Activated T-helper 1 cell treated with anti-CD3 and anti-CD28 coated beads, Interleukin-12 subunit alpha, Interleukin-12 subunit beta, Interleukin-2, Interleukin-4 antibody, amounts not matched to agents 30 ng/mL and 10 ng/mL and 1 ng/mL, durations not matched to agents 14 hours and 24 hours and 36 hours (primary cell): ENCODE measurements at regions of chr4 and their contacts with region 1.

Region 1: GRCh38 chr4:56655209-56655626 is 25.9 kb downstream of the HOPX start:
- DNase-seq: no peak
- H3K4me3 Mint-ChIP-seq: peak overlapping the region; percentile 87
- H3K27ac Mint-ChIP-seq: peak overlapping the region; percentile 85
- H3K4me1 Mint-ChIP-seq: peaks cover 68% of the 10 kb centered on the region
- H3K27me3 Mint-ChIP-seq: peaks cover 23% of the 10 kb centered on the region

Region 2: DNA sequence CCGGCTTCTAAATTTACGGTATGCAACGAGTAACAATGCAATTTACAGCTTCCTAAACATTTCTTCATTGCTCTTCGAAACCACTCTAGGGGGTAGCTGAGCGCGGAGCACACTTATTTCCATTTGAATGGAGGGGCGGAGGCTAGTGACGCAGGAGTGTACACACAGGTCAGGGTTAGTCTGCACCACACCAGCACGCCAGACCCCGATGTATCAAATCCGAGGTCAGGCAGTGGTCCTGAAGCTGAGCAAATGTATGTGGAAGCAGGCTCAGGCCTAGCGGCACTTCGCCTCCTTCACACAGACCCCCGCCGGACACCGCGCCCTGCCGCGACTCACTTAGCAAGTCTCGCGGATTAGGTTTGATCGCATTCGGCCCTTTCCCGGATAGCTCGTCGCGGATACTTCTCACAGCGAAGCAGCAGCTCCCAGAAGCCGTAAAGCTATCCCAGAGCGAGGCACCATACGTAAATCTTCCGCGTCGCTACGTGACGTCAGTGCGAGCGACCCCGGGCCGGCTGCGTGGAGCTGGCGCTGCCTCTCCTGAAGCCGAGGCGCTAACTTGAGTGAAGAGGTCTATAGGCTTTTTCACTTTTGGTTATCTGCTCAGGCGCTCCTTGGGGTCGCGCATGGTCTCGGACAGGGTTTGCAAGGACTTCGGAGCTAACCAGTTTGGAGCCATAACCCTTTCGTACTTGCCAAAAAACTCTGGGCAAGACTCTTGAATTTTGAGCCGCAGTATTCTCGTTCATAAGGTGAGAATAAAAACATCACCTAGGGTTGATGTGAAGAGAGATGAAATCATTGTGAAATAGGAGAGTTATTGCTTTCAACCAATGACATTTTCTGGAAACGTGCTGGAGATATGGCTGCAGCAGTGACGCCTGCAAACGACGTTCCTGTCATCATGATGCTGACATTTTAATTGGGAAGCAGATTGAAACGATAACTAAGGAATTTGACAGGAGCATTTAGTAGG is 267.9 kb before region 1 on chr4 and contains the start of gene AASDH:
- intact Hi-C with region 1: loop called (anchors 5 kb)
- DNase-seq: peak; percentile 93
- H3K4me3 Mint-ChIP-seq: peak within 1 kb of the TSS; percentile 92
- H3K27ac Mint-ChIP-seq: peak within 1 kb of the TSS; percentile 97
- H3K4me1 Mint-ChIP-seq: peaks cover 26% of the 10 kb centered on the region
- H3K27me3 Mint-ChIP-seq: no peaks in the 10 kb centered on the region
- total RNA-seq, gene AASDH: 9.8 and 12.0 TPM in 2 replicates

Region 3: GRCh38 chr4:56544573-56545131 is 110.6 kb before region 1 on chr4:
- intact Hi-C with region 1: loop called (anchors 2 kb)
- DNase-seq: peak; percentile 78
- H3K4me3 Mint-ChIP-seq: peak overlapping the region; percentile 68
- H3K27ac Mint-ChIP-seq: no peak overlapping the region
- H3K4me1 Mint-ChIP-seq: peaks cover 24% of the 10 kb centered on the region
- H3K27me3 Mint-ChIP-seq: peaks cover 15% of the 10 kb centered on the region

Region 4: DNA sequence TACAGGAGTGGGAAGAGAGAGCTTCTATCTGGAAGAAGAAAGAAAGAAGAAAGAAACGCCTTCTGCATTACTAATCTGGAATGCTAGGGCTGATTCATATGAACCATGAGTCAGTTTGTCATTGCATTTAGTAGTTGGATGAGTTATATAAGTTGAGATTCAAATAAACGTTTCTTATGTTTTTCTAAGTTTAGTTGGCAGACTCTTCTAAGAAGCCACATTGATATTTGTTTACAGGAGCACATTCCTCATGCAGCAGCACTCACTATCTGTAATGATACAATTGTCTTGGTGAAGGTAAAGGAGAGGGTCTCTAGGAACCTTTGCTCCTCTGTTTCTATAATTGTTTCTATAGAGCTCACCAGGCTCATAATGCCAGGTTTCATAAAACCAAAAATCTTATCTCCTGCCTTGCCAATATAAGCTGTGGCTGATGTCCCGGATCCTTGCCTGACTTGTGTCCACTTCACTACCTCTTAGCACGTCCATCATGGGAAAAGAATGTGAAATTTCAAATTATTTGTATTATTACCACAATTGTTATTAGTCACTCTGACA is 13.6 kb before region 1 on chr4:
- intact Hi-C with region 1: loop called (anchors 1 kb)
- DNase-seq: no peak
- H3K4me3 Mint-ChIP-seq: no peak overlapping the region
- H3K27ac Mint-ChIP-seq: peak overlapping the region; percentile 82
- H3K4me1 Mint-ChIP-seq: peaks cover 40% of the 10 kb centered on the region
- H3K27me3 Mint-ChIP-seq: peaks cover 3% of the 10 kb centered on the region

Region 5: DNA sequence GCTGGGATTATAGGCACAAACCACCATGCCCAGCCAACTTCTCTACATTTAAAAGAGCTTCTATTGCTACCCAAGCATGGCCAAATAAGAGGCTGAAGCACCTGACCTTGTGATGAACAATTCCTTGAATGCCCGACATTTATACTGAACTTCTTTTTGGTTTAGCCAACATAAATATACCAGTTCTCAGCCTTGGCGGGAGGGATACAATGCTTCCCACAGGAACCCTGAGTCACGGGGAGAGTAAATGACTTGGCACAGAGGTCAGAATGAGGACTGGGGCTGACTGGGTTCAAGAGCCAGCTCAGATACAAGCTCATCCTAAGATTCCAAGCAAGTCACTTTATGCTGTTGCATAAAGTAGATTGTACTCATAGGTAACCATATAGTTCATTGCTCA is 19.8 kb after region 1 on chr4:
- intact Hi-C with region 1: no loop called
- DNase-seq: no peak
- H3K4me3 Mint-ChIP-seq: no peak overlapping the region
- H3K27ac Mint-ChIP-seq: no peak overlapping the region
- H3K4me1 Mint-ChIP-seq: peaks cover 2% of the 10 kb centered on the region
- H3K27me3 Mint-ChIP-seq: peaks cover 32% of the 10 kb centered on the region

Region 6: GRCh38 chr4:56757821-56758411 is 102.7 kb after region 1 on chr4:
- intact Hi-C with region 1: loop called (anchors 5 kb)
- DNase-seq: peak; percentile 70
- H3K4me3 Mint-ChIP-seq: peak overlapping the region; percentile 74
- H3K27ac Mint-ChIP-seq: peak overlapping the region; percentile 98
- H3K4me1 Mint-ChIP-seq: peaks cover 48% of the 10 kb centered on the region
- H3K27me3 Mint-ChIP-seq: peaks cover 2% of the 10 kb centered on the region

Region 7: DNA sequence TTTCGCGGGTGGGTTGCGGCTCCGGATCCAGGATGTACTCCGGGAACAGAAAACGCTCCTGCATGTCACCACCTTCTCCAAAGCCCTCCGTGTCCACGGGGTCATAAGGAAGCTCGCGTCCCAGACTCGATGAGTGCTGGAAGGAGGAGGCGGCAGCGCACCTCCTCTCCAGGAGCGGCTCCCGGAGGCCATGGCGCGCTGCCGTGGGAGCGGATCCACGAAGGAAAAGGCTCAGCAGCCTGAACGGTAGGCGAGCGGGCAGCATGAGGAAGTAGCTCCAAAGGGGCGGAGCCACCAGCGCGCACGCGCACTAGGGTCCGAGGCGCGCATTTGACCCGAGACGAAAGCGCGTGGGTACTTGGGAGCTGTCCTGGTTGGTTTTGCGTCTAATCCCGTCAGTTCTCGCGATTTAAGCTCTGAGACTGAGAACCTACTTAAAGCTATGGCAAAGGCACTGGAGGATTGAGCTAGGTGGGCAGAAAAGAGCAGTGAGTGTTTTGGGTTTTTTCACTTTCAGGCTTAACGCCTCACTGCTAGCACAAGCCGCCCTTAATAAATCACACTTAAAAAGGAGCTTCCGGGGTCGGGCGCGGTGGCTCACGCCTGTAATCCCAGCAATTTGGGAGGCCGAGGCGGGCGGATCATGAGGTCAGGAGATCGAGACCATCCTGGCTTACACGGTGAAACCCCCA is 322.2 kb after region 1 on chr4 and contains the start of gene NOA1:
- intact Hi-C with region 1: loop called (anchors 5 kb)
- DNase-seq: peak; percentile 98
- H3K4me3 Mint-ChIP-seq: peak within 1 kb of the TSS; percentile 100
- H3K27ac Mint-ChIP-seq: peak within 1 kb of the TSS; percentile 100
- H3K4me1 Mint-ChIP-seq: peaks cover 51% of the 10 kb centered on the region
- H3K27me3 Mint-ChIP-seq: no peaks in the 10 kb centered on the region
- total RNA-seq, gene NOA1: 17.7 and 18.3 TPM in 2 replicates

Region 8: DNA sequence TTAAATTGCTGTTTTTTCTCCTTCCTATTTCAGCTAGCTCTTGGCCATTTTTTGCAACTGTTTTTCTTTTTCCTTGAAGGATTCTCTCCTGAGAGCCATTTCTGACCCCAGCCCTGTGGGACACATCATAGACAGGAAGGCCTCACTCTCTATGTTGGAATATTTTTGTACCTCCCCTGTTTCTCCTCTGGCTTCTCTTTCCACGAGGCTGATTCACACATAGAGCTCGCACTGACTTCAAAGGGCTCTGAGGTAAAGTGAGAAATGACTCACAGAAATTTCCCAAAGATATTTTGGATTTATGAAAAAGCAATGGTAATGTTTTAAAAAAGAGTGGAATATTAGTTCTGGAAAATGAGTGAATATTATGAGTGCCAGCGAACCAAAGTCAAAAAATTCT is 636.7 kb after region 1 on chr4:
- intact Hi-C with region 1: no loop called
- DNase-seq: no peak
- H3K4me3 Mint-ChIP-seq: no peak overlapping the region
- H3K27ac Mint-ChIP-seq: no peak overlapping the region
- H3K4me1 Mint-ChIP-seq: no peaks in the 10 kb centered on the region
- H3K27me3 Mint-ChIP-seq: no peaks in the 10 kb centered on the region